ENCODE measurements at regions of chr10 and their contacts with region 1.

Region 1: DNA sequence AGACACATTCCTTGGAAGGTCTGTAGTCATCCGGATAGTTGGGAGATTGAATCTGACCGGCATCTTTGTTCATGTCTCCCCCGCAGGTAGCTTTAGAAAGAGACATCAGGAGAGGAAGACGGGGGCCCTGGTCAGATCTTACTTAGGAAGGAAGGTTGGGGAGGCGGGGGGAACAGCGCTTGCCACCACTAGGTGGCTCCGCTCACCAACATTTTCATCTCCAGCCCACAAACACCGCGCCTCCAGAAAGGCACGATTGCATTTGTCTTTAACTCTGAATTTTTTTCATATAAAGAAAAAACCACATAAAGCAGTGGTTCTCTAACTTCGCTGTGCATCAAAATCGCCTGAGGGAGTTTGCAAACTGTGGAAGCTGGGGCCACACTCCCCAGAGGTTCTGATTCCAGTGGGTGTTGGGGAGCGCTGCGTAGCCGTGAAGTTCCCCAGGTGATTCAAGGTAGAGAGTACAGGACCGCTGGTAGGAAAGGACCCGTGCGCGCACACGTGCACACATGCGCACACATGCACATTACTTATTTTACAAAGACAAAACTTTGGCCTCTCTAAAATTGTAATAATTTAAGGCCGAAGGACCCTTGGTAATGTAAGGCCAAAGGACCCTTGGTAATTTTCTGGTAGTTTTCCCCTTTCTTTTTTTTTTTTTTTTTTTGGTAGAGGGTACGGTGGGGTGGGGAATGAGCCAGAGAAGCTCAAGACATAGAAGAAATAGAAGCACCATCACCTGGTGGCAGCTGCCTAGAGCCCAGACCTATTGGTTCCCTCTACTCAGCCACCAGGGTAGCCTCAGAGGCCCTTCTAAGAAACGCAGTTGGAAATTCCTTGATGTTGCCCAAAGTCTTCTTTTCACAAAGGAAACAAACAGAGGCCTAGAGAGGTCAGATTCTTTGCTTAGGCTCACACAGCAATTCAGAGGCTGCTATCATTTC is 37.4 kb upstream of the OPALIN start:
- DNase-seq: peak; percentile 63 to 71 (median 68)
- ATAC-seq: peak in 3 of 4 donors; percentile 61 to 74 (median 63)
- H3K4me3 ChIP-seq: no peak overlapping the region
- H3K27ac ChIP-seq: peak overlapping the region in 1 of 12 donors; percentile 70
- H3K4me1 ChIP-seq: peaks cover 0 to 49% (median 15%) of the 10 kb centered on the region in 12 donors
- H3K27me3 ChIP-seq: peaks cover 0 to 9% (median 0%) of the 10 kb centered on the region in 9 donors
- CTCF ChIP-seq: peak; percentile 67 to 90 (median 86)
- POLR2A ChIP-seq: no peak

Region 2: GRCh38 chr10:96431211-96431970 is 35.2 kb after region 1 on chr10:
- intact Hi-C with region 1: no loop called
- DNase-seq: no peak
- ATAC-seq: peak in 3 of 4 donors; percentile 18 to 26 (median 20)
- H3K4me3 ChIP-seq: no peak overlapping the region
- H3K27ac ChIP-seq: no peak overlapping the region
- H3K4me1 ChIP-seq: peaks cover 0 to 8% (median 0%) of the 10 kb centered on the region in 12 donors
- H3K27me3 ChIP-seq: no peaks in the 10 kb centered on the region
- CTCF ChIP-seq: no peak
- POLR2A ChIP-seq: no peak

Region 3: DNA sequence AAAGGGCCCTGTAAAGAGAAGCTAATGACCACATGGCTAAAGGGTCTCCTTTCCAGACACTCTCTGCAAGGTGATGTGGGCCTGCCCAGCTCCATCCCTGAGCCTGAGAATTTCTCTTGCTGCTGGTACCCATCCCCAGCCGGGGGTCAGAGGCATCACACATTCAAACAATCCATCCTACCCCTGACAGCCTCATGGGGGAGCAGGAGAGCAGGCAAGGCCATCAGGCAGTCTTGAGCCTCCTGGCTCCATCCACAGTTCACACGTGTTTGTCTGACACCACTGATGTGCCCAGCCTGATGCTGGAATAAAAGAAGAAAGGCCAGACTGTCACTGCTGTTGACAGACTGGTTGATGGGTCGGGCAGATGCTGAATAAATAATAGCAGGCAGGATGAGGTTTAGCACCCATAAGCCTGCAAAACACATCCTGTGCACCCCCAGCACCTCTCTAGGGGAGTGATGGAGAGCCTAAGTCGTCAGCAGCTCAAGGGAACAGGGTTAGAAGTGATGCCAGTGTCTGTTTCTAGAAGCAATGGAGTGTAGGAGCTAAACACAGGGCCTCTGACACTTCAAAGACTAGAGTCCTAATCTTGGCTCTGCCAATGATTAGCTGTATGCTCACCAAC is 74.0 kb after region 1 on chr10:
- intact Hi-C with region 1: loop called in 1 of 10 experiments (anchors 5 kb)
- DNase-seq: peak in 4 of 5 donors; percentile 20 to 62 (median 38)
- ATAC-seq: peak; percentile 55 to 83 (median 78)
- H3K4me3 ChIP-seq: no peak overlapping the region
- H3K27ac ChIP-seq: no peak overlapping the region
- H3K4me1 ChIP-seq: peaks cover 0 to 9% (median 0%) of the 10 kb centered on the region in 12 donors
- H3K27me3 ChIP-seq: no peaks in the 10 kb centered on the region
- CTCF ChIP-seq: peak; percentile 25 to 63 (median 46)
- POLR2A ChIP-seq: no peak

Region 4: DNA sequence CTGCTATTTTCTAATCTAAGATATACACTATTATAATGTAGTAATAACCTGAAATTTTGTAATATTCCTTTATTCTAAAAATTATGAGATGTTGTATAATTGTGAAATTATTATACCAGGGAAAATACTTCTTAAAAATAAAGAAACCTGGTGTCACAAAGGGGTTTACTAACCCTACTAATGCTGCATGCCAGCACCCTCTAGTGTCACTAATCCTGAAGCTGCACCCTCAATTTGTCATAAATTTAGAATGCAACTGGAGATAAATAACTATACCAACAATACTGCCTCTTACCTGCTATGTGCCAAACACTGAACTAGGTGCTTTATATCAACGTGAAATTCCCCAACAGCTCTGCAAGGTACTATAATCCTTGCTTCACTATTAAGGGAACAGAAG is 159.8 kb after region 1 on chr10:
- intact Hi-C with region 1: loop called in 3 of 10 experiments (anchors 1 to 10 kb)
- DNase-seq: no peak
- ATAC-seq: no peak
- H3K4me3 ChIP-seq: no peak overlapping the region
- H3K27ac ChIP-seq: no peak overlapping the region
- H3K4me1 ChIP-seq: peaks cover 0 to 5% (median 0%) of the 10 kb centered on the region in 12 donors
- H3K27me3 ChIP-seq: no peaks in the 10 kb centered on the region
- CTCF ChIP-seq: peak; percentile 13 to 63 (median 46)
- POLR2A ChIP-seq: no peak

Region 5: DNA sequence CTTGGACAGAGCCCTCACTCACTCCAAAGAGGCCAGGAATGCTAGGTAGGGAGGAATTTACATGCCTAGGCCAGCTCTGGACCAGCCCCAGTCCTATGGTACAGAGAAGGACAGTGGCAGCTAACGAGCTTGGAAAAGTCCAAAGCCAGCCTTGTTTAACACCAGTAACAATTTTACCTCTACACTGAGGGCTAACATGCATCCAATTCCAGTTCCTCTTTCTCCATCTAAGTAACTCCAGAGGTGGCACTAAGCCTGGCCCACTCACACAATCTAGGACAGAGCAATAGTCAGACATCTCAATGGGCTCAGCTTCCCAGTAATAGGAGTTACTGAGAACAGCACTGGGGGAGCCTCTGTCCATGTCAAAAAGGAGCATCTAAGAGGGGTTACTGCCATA is 430.2 kb after region 1 on chr10:
- intact Hi-C with region 1: loop called in 6 of 10 experiments (anchors 5 to 10 kb)
- DNase-seq: no peak
- ATAC-seq: peak in 1 of 4 donors; percentile 11
- H3K4me3 ChIP-seq: no peak overlapping the region
- H3K27ac ChIP-seq: no peak overlapping the region
- H3K4me1 ChIP-seq: peaks cover 0 to 14% (median 6%) of the 10 kb centered on the region in 12 donors
- H3K27me3 ChIP-seq: no peaks in the 10 kb centered on the region
- CTCF ChIP-seq: no peak
- POLR2A ChIP-seq: no peak

Region 6: DNA sequence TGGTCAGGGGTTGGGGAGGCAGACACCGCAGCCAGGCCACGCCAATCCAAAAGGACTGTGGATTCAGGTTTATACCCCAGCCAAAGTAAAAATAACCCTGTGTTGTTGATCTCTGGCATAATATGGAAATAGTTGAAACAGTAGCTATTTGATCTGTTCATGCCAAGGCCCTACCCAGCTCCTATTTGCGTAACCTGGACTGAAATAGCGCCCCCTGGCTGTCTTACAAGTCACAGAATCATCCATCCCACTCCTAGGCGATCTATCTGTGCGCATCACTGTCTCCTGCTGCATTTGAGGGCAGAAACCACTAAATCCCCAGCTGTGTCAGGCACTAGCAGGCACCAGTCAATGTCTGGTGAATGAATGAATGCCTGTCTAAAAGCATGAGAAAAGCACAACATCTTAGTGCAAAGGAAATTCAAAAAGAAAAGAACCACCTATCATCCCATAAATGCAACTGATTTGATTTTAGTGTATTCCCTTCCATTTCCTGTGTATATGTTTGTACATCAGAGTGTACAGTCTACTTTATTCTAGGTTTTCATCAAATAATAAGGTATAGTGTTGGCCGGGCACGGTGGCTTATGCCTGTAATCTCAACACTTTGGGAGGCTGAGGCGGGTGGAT is 629.5 kb after region 1 on chr10:
- intact Hi-C with region 1: loop called in 2 of 10 experiments (anchors 10 kb)
- DNase-seq: peak in 3 of 5 donors; percentile 32 to 49 (median 40)
- ATAC-seq: peak in 3 of 4 donors; percentile 31 to 45 (median 34)
- H3K4me3 ChIP-seq: no peak overlapping the region
- H3K27ac ChIP-seq: peak overlapping the region in 2 of 12 donors; percentile 11 to 67
- H3K4me1 ChIP-seq: peaks cover 0 to 28% (median 15%) of the 10 kb centered on the region in 12 donors
- H3K27me3 ChIP-seq: no peaks in the 10 kb centered on the region
- CTCF ChIP-seq: peak; percentile 50 to 73 (median 67)
- POLR2A ChIP-seq: no peak

Region 7: GRCh38 chr10:97701438-97702069 is 1305.3 kb after region 1 on chr10:
- intact Hi-C with region 1: loop called in 1 of 10 experiments (anchors 5 kb)
- DNase-seq: peak in 1 of 5 donors; percentile 41
- ATAC-seq: peak; percentile 61 to 93 (median 91)
- H3K4me3 ChIP-seq: no peak overlapping the region
- H3K27ac ChIP-seq: no peak overlapping the region
- H3K4me1 ChIP-seq: peaks cover 0 to 7% (median 0%) of the 10 kb centered on the region in 12 donors
- H3K27me3 ChIP-seq: no peaks in the 10 kb centered on the region
- CTCF ChIP-seq: peak; percentile 67 to 89 (median 80)
- POLR2A ChIP-seq: no peak

Measured in heart left ventricle (tissue), 16 donors.